BJ (cell line): ENCODE measurements at regions of chrX and their contacts with region 1.

Region 1: GRCh38 chrX:149512225-149512885 is 7.2 kb upstream of the IDS start:
- DNase-seq: no peak
- H3K4me3 ChIP-seq: no peak overlapping the region
- H3K27me3 ChIP-seq: no peaks in the 10 kb centered on the region
- CTCF ChIP-seq: peak; percentile 66

Region 2: GRCh38 chrX:149522916-149523315 is 10.6 kb after region 1 on chrX:
- CTCF ChIA-PET with region 1: interaction called, 10 read pairs
- POLR2A ChIA-PET with region 1: no interaction called
- DNase-seq: no peak
- H3K4me3 ChIP-seq: no peak overlapping the region
- H3K27me3 ChIP-seq: peaks cover 3% of the 10 kb centered on the region; the same call in 1 of the 2 replicates
- CTCF ChIP-seq: no peak

Region 3: GRCh38 chrX:149962859-149963757 is 450.8 kb after region 1 on chrX:
- CTCF ChIA-PET with region 1: no interaction called
- POLR2A ChIA-PET with region 1: no interaction called
- DNase-seq: no peak
- H3K4me3 ChIP-seq: no peak overlapping the region
- H3K27me3 ChIP-seq: no peaks in the 10 kb centered on the region
- CTCF ChIP-seq: peak; percentile 63